Activated CD8-positive, alpha-beta memory T cell treated with anti-CD3 and anti-CD28 coated beads, Interleukin-2, amount 10 ng/mL, durations not matched to agents 7 days and 5 days (primary cell): ENCODE measurements at regions of chr4 and their contacts with region 1.

Region 1: GRCh38 chr4:185039508-185040273 is 21.4 kb downstream of the HELT start:
- DNase-seq: peak; percentile 62
- ATAC-seq: peak; percentile 80
- H3K4me3 Mint-ChIP-seq: peak overlapping the region; percentile 40
- H3K27ac Mint-ChIP-seq: no peak overlapping the region
- H3K4me1 Mint-ChIP-seq: peaks cover 6% of the 10 kb centered on the region
- H3K27me3 Mint-ChIP-seq: peaks cover 36% of the 10 kb centered on the region

Region 2: DNA sequence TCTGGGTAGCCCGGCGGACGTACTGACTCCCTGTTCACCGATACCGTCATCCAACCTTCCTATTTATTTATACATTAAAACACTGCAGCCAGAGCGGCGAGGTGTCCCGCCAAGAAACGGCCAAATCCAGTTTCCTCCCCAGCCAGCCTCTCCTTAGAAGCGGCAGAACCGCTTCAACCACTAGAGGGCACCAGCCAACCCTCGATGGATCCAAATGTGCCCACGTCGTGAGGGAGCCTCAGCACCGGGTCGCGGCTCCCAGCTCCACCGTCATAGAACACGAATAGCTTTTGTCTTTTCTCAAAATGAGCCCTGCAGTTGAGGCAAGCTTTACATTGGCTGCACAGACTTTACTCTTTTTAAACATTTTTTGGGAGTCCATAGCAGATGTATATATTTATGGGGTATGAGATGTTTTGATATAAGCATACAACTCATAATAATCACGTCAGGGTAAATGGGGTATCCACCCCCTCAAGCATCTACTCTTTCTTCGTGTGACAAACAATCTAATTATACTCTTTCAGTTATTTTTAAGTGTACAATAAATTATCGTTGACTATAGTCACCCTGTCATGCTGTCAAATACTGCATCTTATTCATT is 34.4 kb before region 1 on chr4:
- CTCF ChIA-PET with region 1: interaction called, 15 read pairs
- DNase-seq: peak; percentile 85
- ATAC-seq: peak; percentile 94
- H3K4me3 Mint-ChIP-seq: no peak overlapping the region
- H3K27ac Mint-ChIP-seq: no peak overlapping the region
- H3K4me1 Mint-ChIP-seq: peaks cover 6% of the 10 kb centered on the region
- H3K27me3 Mint-ChIP-seq: peaks cover 54% of the 10 kb centered on the region

Region 3: GRCh38 chr4:185096032-185096653 is 56.5 kb after region 1 on chr4:
- CTCF ChIA-PET with region 1: interaction called, 43 read pairs
- DNase-seq: no peak
- ATAC-seq: no peak
- H3K4me3 Mint-ChIP-seq: no peak overlapping the region
- H3K27ac Mint-ChIP-seq: no peak overlapping the region
- H3K4me1 Mint-ChIP-seq: no peaks in the 10 kb centered on the region
- H3K27me3 Mint-ChIP-seq: peaks cover 30% of the 10 kb centered on the region